Right ventricle myocardium superior (tissue), 1 donor: ENCODE measurements at regions of chr11 and their contacts with region 1.

Region 1: DNA sequence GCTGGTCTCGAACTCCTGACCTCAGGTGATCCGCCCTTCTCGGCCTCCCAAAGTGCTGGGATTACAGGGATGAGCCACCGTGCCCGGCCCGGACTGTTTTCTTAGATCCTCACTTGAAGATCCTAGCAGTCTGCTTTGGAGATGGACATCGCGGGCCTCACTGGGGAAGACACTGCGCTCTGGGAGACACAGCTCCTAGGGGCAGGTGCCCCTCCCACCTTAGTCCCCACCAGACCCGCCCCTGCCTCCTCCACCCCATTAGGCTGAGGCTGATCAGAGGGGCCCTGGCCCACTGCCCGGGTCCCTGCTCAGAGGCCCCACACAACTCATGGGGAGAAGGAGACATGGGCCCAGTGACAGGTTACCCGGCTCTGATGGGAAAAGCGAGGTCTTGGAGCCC is 11.3 kb upstream of the LTO1 start:
- DNase-seq: no peak
- ATAC-seq: no peak

Region 2: GRCh38 chr11:69321877-69322361 is 364.5 kb before region 1 on chr11:
- intact Hi-C with region 1: no loop called
- DNase-seq: no peak
- ATAC-seq: no peak

Region 3: GRCh38 chr11:69615565-69616251 is 70.7 kb before region 1 on chr11:
- intact Hi-C with region 1: no loop called
- DNase-seq: no peak
- ATAC-seq: no peak

Region 4: GRCh38 chr11:69642913-69643632 is 43.4 kb before region 1 on chr11:
- intact Hi-C with region 1: no loop called
- DNase-seq: peak; percentile 88
- ATAC-seq: peak; percentile 76

Region 5: GRCh38 chr11:69888483-69889076 is 202.1 kb after region 1 on chr11:
- intact Hi-C with region 1: loop called (anchors 2 kb)
- DNase-seq: peak; percentile 67
- ATAC-seq: peak; percentile 78

Region 6: DNA sequence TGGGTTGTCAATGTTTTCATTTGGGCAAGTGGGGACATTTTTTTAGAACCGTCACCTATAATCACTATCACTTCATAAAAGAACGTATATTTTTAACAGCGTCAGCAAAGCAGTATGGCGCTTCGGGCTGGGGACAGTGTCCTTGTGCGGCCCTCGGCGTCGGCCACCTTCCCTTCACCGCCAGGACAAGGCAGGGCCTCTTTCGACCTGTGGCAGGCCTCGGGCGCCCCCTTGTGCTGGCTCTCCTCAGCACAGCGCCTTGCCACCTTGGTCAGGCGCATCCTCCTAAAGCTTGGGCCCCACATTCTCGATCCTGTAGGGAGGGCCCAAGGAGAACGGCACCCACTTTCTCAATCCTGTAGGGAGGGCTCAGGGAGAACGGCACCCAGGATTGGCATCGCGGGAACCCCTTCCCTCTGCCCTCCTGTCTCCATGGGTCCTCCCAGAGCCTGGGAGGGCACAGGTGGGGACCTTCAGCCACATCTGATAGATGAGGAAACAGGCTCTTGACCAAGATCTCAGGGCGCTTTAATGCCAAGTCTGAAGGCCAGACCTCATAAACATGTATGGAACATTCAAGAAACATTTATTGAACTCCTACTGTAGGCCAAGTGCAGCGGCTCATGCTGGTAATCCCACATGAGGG is 505.2 kb after region 1 on chr11:
- intact Hi-C with region 1: loop called (anchors 5 kb)
- DNase-seq: peak; percentile 89
- ATAC-seq: peak; percentile 96